Activated naive CD4-positive, alpha-beta T cell treated with anti-CD3 and anti-CD28 coated beads, Interleukin-2, amount 10 ng/mL, durations not matched to agents 7 days and 5 days (primary cell): ENCODE measurements at regions of chr18 and their contacts with region 1.

Region 1: GRCh38 chr18:49041435-49042245 is 90.9 kb upstream of the SMAD7 start:
- DNase-seq: peak; percentile 72
- H3K4me3 Mint-ChIP-seq: no peak overlapping the region
- H3K27ac Mint-ChIP-seq: no peak overlapping the region
- H3K4me1 Mint-ChIP-seq: peaks cover 6% of the 10 kb centered on the region
- H3K27me3 Mint-ChIP-seq: no peaks in the 10 kb centered on the region

Region 2: DNA sequence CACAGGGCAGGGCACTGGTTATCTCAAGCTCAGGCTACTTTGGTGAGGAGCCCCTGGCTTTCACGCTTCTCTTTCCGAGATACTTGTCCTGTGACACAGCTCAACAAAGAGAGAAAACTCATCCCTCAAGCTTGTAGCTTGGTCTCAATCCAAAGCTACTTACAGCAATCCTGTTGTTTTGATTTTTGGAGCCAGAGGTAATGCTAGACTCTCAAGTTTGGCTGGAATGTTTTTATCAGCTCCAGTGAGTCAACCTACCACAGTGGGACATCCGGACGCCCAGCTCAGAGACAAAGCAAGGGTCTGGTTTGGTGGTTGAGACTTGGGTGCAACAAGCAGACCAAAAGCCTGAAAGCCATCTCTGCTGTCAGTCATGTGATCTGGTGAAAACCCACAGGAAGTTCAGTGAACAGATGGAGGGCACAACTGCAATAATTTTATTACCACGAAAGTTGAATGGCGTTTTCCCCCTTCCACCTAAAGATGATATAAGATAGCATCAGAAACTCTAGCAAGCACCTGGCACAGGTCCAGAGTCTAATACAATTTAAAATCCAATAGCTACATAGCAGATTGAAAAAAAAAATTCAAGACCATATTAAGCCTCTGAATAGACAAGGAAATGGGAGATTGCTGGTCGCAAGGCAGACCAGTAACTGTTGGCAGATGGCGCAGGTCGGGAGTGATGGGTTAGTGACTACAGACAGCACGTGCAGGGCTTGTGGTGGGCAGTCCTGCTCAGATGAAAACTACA is 11.4 kb after region 1 on chr18:
- CTCF ChIA-PET with region 1: interaction called, 17 read pairs
- DNase-seq: peak; percentile 44
- H3K4me3 Mint-ChIP-seq: no peak overlapping the region
- H3K27ac Mint-ChIP-seq: peak overlapping the region; percentile 60
- H3K4me1 Mint-ChIP-seq: peaks cover 30% of the 10 kb centered on the region
- H3K27me3 Mint-ChIP-seq: no peaks in the 10 kb centered on the region